PC-3 (cell line): ENCODE measurements at regions of chr11 and their contacts with region 1.

Region 1: GRCh38 chr11:118145285-118146227 is 7.1 kb downstream of the SCN4B start:
- DNase-seq: peak; percentile 95
- ATAC-seq: peak; percentile 96
- H3K4me3 ChIP-seq: peak overlapping the region; percentile 87
- H3K27ac ChIP-seq: no peak overlapping the region
- H3K4me1 ChIP-seq: no peaks in the 10 kb centered on the region
- H3K27me3 ChIP-seq: peaks cover 42% of the 10 kb centered on the region
- CTCF ChIP-seq: peak; percentile 96

Region 2: GRCh38 chr11:118171269-118172062 is 25.9 kb after region 1 on chr11:
- CTCF ChIA-PET with region 1: interaction called, 3 read pairs
- POLR2A ChIA-PET with region 1: no interaction called
- intact Hi-C with region 1: loop called (anchors 1 kb)
- DNase-seq: peak; percentile 80
- ATAC-seq: peak; percentile 80
- H3K4me3 ChIP-seq: no peak overlapping the region
- H3K27ac ChIP-seq: no peak overlapping the region
- H3K4me1 ChIP-seq: peaks cover 19% of the 10 kb centered on the region
- H3K27me3 ChIP-seq: peaks cover 36% of the 10 kb centered on the region
- CTCF ChIP-seq: peak; percentile 97

Region 3: GRCh38 chr11:118263695-118264567 is 118.4 kb after region 1 on chr11 and contains the start of gene MPZL2:
- CTCF ChIA-PET with region 1: no interaction called
- POLR2A ChIA-PET with region 1: no interaction called
- intact Hi-C with region 1: no loop called
- DNase-seq: peak; percentile 95
- ATAC-seq: peak; percentile 91
- H3K4me3 ChIP-seq: peak within 1 kb of the TSS; percentile 82
- H3K27ac ChIP-seq: peak within 1 kb of the TSS; percentile 94
- H3K4me1 ChIP-seq: peaks cover 28% of the 10 kb centered on the region
- H3K27me3 ChIP-seq: no peaks in the 10 kb centered on the region
- CTCF ChIP-seq: peak; percentile 46
- total RNA-seq, gene MPZL2: 40.6 and 51.5 TPM in 2 replicates

Region 4: GRCh38 chr11:118290923-118291322 is 145.4 kb after region 1 on chr11:
- CTCF ChIA-PET with region 1: no interaction called
- POLR2A ChIA-PET with region 1: no interaction called
- intact Hi-C with region 1: loop called (anchors 1 kb)
- DNase-seq: peak; percentile 86
- ATAC-seq: peak; percentile 69
- H3K4me3 ChIP-seq: peak overlapping the region; percentile 42; the same call in 1 of the 2 replicates
- H3K27ac ChIP-seq: no peak overlapping the region
- H3K4me1 ChIP-seq: peaks cover 34% of the 10 kb centered on the region
- H3K27me3 ChIP-seq: no peaks in the 10 kb centered on the region
- CTCF ChIP-seq: peak; percentile 92

Region 5: DNA sequence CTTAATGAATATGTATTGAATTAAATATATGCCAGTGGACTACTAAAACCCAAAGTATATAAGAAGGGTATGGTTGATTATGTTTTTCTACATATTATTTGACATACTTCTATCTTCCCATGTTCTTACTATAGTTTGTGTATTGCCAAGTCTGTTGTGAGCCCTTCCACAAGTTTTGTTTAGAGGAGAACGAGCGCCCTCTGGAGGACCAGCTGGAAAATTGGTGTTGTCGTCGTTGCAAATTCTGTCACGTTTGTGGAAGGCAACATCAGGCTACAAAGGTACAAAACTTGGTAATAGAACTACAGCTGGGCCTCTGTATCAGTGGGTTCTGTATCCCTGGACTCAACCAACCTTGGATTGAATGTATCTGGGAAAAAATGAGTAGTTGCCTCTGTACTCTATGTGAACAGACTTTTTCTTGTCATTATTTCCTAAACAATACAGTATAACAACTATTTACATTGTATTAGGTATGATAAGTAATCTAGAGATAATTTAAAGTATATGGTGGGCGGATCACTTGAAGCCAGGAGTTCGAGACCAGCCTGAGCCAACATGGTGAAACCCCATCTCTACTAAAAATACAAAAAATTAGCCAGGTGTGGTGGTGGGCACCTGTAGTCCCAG is 343.0 kb after region 1 on chr11:
- CTCF ChIA-PET with region 1: no interaction called
- POLR2A ChIA-PET with region 1: no interaction called
- intact Hi-C with region 1: loop called (anchors 5 kb)
- DNase-seq: peak; percentile 80
- ATAC-seq: peak; percentile 73
- H3K4me3 ChIP-seq: no peak overlapping the region
- H3K27ac ChIP-seq: no peak overlapping the region
- H3K4me1 ChIP-seq: no peaks in the 10 kb centered on the region
- H3K27me3 ChIP-seq: no peaks in the 10 kb centered on the region
- CTCF ChIP-seq: peak; percentile 97

Region 6: DNA sequence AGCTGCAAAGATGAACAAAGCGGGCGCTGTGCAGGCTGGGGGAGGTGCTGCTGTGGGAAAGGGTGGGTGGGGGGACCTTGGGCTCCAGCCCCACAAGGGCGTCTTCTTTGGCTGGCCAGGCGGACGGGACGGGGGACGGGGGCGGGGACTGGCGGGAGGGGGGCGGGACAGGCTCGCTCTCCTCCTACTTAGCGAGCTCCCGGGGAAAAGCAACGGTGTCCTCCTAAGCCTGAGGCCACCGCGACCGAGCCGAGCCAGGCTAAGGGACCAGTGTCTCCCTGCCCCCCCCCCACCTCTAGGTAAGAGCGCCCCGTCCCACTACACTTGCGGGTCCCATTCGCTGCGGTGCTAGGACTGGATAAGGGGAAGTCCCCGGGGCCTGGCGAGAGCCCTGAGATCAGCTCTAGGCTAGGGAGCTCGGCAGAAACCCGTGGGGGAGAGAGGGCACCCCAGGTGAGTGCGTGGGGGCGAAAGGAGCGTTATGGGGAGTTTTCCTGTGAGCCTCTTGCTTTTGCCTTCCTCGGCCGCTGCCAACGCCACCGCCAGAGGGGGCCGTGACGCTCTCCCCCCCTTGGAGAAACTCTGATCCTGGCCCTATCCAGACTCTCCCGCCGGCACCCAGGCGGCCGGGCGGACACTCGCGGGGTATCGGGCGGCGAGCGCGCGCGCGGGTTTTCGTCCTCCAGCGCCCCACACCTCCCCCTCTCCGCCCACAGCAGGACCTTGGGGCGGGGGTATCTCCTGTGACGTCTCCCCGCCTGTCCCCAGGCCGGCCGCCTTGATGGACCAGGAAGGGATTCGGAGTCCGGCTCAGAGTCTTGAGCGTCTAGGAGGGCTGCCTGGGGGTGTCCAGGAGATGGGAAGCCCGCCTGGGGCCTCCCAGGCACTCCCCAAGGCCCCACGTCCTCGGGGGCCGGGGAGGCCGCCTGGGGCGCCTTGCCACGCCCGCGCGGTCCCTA is 462.1 kb after region 1 on chr11 and contains the start of gene PHLDB1:
- CTCF ChIA-PET with region 1: no interaction called
- POLR2A ChIA-PET with region 1: interaction called, 15 read pairs
- intact Hi-C with region 1: no loop called
- DNase-seq: peak; percentile 64
- ATAC-seq: peak; percentile 71
- H3K4me3 ChIP-seq: peak within 1 kb of the TSS; percentile 85
- H3K27ac ChIP-seq: no peak within 1 kb of the TSS
- H3K4me1 ChIP-seq: peaks cover 5% of the 10 kb centered on the region; the same call in 1 of the 2 replicates
- H3K27me3 ChIP-seq: no peaks in the 10 kb centered on the region
- CTCF ChIP-seq: peak; percentile 80
- total RNA-seq, gene PHLDB1: 36.1 and 37.1 TPM in 2 replicates